Pancreas (tissue), 10 donors: ENCODE measurements at regions of chr1 and their contacts with region 1.

Region 1: GRCh38 chr1:186985889-186986491 is 157.2 kb downstream of the PLA2G4A start:
- DNase-seq: peak in 1 of 6 donors; percentile 12
- ATAC-seq: peak in 3 of 4 donors; percentile 87 to 91 (median 90)
- H3K4me3 ChIP-seq: no peak overlapping the region
- H3K27ac ChIP-seq: no peak overlapping the region
- H3K4me1 ChIP-seq: no peaks in the 10 kb centered on the region
- H3K27me3 ChIP-seq: peaks cover 0 to 4% (median 0%) of the 10 kb centered on the region in 4 donors
- CTCF ChIP-seq: peak; percentile 19 to 56 (median 50)

Region 2: DNA sequence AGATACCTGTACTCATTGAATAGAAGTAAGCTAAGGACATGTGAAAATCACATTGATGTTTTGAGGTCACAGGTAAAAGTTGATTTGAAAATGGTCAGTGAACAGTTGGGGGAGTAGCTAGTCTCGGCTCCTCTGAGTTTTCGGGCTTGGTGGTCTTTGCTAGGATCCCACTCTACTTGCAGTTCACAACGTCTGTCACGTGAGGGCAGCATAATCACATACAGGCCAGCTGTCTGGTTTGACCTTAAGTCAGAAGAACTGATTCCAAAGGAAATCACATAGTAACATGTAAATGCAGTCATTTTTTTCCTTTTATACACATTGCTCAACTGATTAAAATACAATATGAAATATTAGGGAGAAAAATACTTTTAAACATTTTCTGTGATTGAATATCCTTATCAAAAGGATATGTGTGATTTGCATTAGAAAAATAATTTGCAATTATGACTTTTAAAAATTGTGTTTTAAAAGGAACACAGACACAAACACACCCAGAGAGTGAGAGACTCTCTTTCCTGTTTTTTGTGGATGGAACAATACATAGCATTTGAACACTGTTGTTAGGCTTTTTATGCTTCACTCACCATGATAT is 503.2 kb before region 1 on chr1:
- intact Hi-C with region 1: loop called in 1 of 3 experiments (anchors 5 kb)
- DNase-seq: peak in 3 of 6 donors; percentile 18 to 24 (median 19)
- ATAC-seq: peak in 3 of 4 donors; percentile 66 to 80 (median 79)
- H3K4me3 ChIP-seq: no peak overlapping the region
- H3K27ac ChIP-seq: no peak overlapping the region
- H3K4me1 ChIP-seq: no peaks in the 10 kb centered on the region
- H3K27me3 ChIP-seq: no peaks in the 10 kb centered on the region
- CTCF ChIP-seq: peak; percentile 25 to 66 (median 59)

Region 3: DNA sequence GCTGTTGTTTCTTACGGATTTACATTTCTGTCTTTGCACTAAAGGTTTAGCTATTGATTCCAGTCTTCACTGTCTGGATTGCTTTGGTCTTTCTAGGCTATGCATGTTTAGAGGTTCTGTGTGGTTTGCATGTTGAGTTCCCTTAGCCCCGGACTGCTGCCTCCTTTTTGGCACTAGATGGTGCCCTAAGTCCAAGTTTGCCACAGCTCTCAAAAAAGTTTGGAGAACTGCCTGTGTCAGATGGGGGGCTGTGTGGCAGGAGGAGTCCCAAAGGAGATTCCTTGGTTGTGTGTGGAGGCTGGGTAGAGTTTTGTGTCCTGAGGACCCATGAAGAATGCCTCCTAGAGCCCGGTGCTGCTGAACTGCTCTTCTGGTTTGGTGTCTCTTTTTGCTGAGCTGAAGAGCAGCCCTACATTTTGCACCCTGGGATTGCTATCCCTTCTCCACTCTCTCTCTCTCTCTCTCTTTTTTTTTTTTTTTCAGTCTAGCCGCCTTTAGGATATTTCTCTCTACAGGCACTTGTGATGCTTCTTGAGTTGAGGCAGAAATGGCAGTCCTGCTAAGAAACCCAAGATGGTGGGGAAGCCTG is 380.1 kb before region 1 on chr1:
- intact Hi-C with region 1: loop called in 1 of 3 experiments (anchors 10 kb)
- DNase-seq: peak in 2 of 6 donors; percentile 16 to 19
- ATAC-seq: peak in 3 of 4 donors; percentile 55 to 70 (median 56)
- H3K4me3 ChIP-seq: no peak overlapping the region
- H3K27ac ChIP-seq: no peak overlapping the region
- H3K4me1 ChIP-seq: no peaks in the 10 kb centered on the region
- H3K27me3 ChIP-seq: no peaks in the 10 kb centered on the region
- CTCF ChIP-seq: peak in 1 of 4 donors; percentile 19

Region 4: GRCh38 chr1:186899577-186899976 is 86.4 kb before region 1 on chr1:
- intact Hi-C with region 1: no loop called
- DNase-seq: no peak
- ATAC-seq: no peak
- H3K4me3 ChIP-seq: no peak overlapping the region
- H3K27ac ChIP-seq: no peak overlapping the region
- H3K4me1 ChIP-seq: no peaks in the 10 kb centered on the region
- H3K27me3 ChIP-seq: no peaks in the 10 kb centered on the region
- CTCF ChIP-seq: no peak